ENCODE measurements at regions of chr6 and their contacts with region 1.

Region 1: GRCh38 chr6:90216072-90216977 is 80.3 kb downstream of the BACH2 start:
- DNase-seq: no peak
- H3K4me3 ChIP-seq: no peak overlapping the region
- H3K27ac ChIP-seq: peak overlapping the region; percentile 61 to 94
- H3K4me1 ChIP-seq: peaks cover 19% of the 10 kb centered on the region
- H3K27me3 ChIP-seq: no peaks in the 10 kb centered on the region
- CTCF ChIP-seq: no peak
- POLR2A ChIP-seq: no peak

Region 2: DNA sequence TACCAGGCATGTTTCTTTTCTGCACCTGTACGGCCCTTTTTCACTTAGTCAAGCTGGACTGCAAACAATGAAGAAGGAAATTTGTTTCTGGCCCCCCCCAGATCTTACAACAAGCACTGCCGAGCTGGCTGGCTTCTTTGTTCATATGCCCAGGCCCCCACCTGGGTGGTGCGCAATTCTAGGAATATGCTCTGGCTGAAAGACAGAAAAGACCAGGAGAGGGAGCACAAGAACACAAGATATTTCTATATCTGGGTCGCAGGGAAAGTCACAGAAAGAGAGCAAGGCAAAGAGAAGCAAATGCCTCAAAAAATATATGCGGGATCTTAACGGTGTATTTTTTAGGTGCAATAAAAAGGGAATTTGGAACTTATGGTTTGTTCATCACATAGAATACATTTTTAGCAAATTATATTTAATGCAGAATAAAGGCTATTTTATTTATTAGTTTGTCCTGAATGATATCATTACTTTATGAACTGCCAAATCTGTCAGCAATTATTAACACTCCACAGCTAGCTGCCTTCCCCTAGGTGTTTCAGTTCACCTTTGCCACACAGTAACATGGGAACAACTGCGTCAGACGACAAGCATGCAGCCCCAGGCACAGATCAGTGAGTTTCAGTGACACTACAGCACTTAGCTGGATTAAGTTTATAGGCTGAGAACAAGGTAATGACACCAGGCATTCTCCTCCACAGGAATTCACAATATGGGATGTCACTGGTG is 245.6 kb before region 1 on chr6:
- intact Hi-C with region 1: loop called (anchors 10 kb)
- DNase-seq: peak; percentile 40
- H3K4me3 ChIP-seq: no peak overlapping the region
- H3K27ac ChIP-seq: no peak overlapping the region
- H3K4me1 ChIP-seq: no peaks in the 10 kb centered on the region
- H3K27me3 ChIP-seq: no peaks in the 10 kb centered on the region
- CTCF ChIP-seq: peak in 3 of 4 experiments; percentile 48 to 75 (median 73)
- POLR2A ChIP-seq: no peak

Region 3: DNA sequence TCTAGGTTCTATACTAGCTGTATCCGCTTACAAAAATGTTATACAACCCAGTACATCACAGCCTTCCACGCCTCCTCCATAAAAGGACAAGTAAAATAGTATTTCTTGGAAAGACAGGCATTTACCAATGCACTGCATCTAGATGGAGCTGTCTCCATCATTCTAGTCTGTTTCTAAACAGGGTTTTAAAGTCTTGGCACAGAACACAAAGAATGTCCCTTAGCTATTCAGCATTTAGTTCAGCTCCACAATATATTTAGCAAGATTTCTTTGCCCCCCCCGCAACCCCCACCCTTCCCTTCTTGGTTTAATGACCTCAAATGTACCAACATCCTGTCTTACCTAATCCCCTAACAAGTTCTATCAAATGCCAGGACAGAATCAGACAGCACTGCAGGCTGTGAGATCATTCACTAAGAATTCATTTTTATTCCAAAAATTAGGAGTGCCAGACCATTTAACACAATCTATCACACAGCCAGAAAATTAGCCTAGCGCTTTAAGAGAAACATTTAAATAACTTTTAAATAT is 118.3 kb before region 1 on chr6:
- intact Hi-C with region 1: loop called (anchors 5 kb)
- DNase-seq: peak; percentile 75
- H3K4me3 ChIP-seq: no peak overlapping the region
- H3K27ac ChIP-seq: peak overlapping the region; percentile 48 to 67
- H3K4me1 ChIP-seq: no peaks in the 10 kb centered on the region
- H3K27me3 ChIP-seq: no peaks in the 10 kb centered on the region
- CTCF ChIP-seq: peak in 3 of 4 experiments; percentile 15 to 46 (median 43)
- POLR2A ChIP-seq: no peak